Activated CD4-positive, alpha-beta memory T cell treated with anti-CD3 and anti-CD28 coated beads for 36 hours (primary cell): ENCODE measurements at regions of chr4 and their contacts with region 1.

Region 1: DNA sequence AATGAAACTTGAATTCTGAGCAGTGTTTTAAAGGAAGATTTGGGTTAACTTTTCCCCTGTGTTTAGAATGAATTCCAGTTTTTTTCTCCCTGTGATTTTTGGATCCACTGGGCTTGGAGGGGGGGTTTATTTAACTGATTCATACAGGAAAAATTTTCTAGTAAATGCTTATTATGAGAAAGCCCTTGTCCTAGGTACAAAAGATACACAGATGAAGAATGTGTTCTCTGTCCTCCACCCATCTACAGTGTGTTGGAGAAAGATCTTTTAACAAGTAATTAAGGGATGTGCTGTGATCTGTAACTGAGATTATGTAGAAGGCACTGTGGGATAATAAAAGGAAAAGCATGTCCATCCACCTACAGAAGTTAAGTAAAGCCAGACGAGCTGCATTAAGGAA is 103.9 kb downstream of the STIM2 start:
- DNase-seq: no peak
- H3K4me3 Mint-ChIP-seq: no peak overlapping the region
- H3K27ac Mint-ChIP-seq: no peak overlapping the region
- H3K4me1 Mint-ChIP-seq: peaks cover 49% of the 10 kb centered on the region
- H3K27me3 Mint-ChIP-seq: no peaks in the 10 kb centered on the region

Region 2: GRCh38 chr4:26619784-26620183 is 344.7 kb before region 1 on chr4:
- CTCF ChIA-PET with region 1: no interaction called
- POLR2A ChIA-PET with region 1: no interaction called
- intact Hi-C with region 1: no loop called
- DNase-seq: no peak
- H3K4me3 Mint-ChIP-seq: no peak overlapping the region
- H3K27ac Mint-ChIP-seq: no peak overlapping the region
- H3K4me1 Mint-ChIP-seq: no peaks in the 10 kb centered on the region
- H3K27me3 Mint-ChIP-seq: no peaks in the 10 kb centered on the region

Region 3: DNA sequence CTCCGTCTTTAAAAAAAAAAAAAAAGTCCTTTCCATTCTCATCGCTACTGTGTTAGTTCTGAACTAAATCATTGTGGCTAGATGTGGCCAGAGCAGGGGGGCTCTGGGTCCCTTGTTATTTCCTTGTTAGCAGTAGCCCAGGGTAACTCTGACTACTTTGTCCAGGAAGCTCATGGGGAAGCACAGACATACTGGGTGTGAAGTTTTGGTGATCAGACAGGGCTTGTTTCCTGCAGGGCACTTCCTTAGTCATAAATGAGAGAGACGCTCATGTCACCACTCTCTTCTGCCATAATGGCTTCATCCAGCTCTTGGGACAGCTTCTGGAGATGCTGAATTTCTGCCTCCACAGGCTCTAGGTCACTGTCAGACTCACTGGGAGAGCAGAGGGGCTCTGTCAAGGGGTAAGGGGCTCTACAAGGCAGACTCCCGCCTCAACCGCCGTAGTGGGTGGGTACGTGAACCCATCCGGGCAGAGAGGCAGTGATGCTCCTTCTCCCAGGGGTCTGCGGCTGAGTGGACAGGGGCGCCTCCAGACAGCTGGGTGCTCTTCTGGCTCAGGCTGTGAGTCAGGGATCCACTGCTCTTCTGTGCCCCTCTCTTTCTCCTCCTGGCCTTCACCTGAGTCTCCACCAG is 91.0 kb before region 1 on chr4:
- CTCF ChIA-PET with region 1: no interaction called
- POLR2A ChIA-PET with region 1: no interaction called
- intact Hi-C with region 1: loop called (anchors 1 kb)
- DNase-seq: peak; percentile 87
- H3K4me3 Mint-ChIP-seq: peak overlapping the region; percentile 43
- H3K27ac Mint-ChIP-seq: peak overlapping the region; percentile 88
- H3K4me1 Mint-ChIP-seq: peaks cover 77% of the 10 kb centered on the region
- H3K27me3 Mint-ChIP-seq: no peaks in the 10 kb centered on the region

Region 4: DNA sequence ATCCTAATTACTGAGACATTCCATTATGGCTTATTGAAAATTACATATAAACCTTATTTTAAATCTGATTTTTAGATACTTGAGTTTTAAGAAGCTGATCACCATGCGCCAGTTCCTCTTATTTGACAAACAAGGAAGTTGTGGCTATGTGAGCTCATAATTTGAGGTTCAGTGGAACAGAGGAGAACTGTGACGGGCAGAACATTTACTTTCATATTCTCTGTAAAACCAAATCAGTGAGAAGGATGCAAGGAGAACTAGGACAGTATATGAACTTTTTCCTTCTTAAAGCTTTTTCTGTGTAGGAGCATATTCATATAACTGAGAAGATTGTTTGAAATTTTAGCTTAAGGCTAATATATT is 78.6 kb before region 1 on chr4:
- CTCF ChIA-PET with region 1: no interaction called
- POLR2A ChIA-PET with region 1: no interaction called
- intact Hi-C with region 1: loop called (anchors 1 kb)
- DNase-seq: no peak
- H3K4me3 Mint-ChIP-seq: peak overlapping the region; percentile 63
- H3K27ac Mint-ChIP-seq: peak overlapping the region; percentile 83
- H3K4me1 Mint-ChIP-seq: peaks cover 67% of the 10 kb centered on the region
- H3K27me3 Mint-ChIP-seq: no peaks in the 10 kb centered on the region

Region 5: DNA sequence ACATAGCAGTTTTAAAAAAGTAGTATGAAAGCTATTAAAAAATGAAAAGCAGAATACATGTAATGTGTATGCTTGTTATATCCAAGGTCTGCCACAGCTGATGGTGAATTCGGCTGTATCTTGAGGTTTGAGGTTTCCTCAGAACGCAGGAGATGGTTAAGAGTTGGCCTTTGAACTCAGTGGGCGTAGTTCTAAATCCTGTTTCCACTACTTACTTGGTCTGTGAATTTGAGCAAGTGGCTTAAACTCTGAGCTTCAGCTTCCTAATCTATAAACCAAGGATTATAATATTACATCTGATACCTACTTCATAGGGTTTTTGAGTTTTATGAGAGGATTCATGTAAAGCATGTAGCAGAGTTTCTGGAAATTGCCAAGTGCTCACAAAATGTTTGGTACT is 21.4 kb after region 1 on chr4:
- CTCF ChIA-PET with region 1: no interaction called
- POLR2A ChIA-PET with region 1: no interaction called
- intact Hi-C with region 1: loop called (anchors 2 kb)
- DNase-seq: peak; percentile 56
- H3K4me3 Mint-ChIP-seq: no peak overlapping the region
- H3K27ac Mint-ChIP-seq: no peak overlapping the region
- H3K4me1 Mint-ChIP-seq: peaks cover 43% of the 10 kb centered on the region
- H3K27me3 Mint-ChIP-seq: no peaks in the 10 kb centered on the region

Region 6: GRCh38 chr4:27000820-27001219 is 36.3 kb after region 1 on chr4:
- CTCF ChIA-PET with region 1: no interaction called
- POLR2A ChIA-PET with region 1: no interaction called
- intact Hi-C with region 1: loop called (anchors 1 kb)
- DNase-seq: no peak
- H3K4me3 Mint-ChIP-seq: no peak overlapping the region
- H3K27ac Mint-ChIP-seq: peak overlapping the region; percentile 51
- H3K4me1 Mint-ChIP-seq: peaks cover 52% of the 10 kb centered on the region
- H3K27me3 Mint-ChIP-seq: no peaks in the 10 kb centered on the region

Region 7: GRCh38 chr4:27894951-27895350 is 930.4 kb after region 1 on chr4:
- CTCF ChIA-PET with region 1: no interaction called
- POLR2A ChIA-PET with region 1: no interaction called
- intact Hi-C with region 1: no loop called
- DNase-seq: no peak
- H3K4me3 Mint-ChIP-seq: no peak overlapping the region
- H3K27ac Mint-ChIP-seq: no peak overlapping the region
- H3K4me1 Mint-ChIP-seq: no peaks in the 10 kb centered on the region
- H3K27me3 Mint-ChIP-seq: no peaks in the 10 kb centered on the region